Calu3 (cell line): ENCODE measurements at regions of chr3 and their contacts with region 1.

Region 1: DNA sequence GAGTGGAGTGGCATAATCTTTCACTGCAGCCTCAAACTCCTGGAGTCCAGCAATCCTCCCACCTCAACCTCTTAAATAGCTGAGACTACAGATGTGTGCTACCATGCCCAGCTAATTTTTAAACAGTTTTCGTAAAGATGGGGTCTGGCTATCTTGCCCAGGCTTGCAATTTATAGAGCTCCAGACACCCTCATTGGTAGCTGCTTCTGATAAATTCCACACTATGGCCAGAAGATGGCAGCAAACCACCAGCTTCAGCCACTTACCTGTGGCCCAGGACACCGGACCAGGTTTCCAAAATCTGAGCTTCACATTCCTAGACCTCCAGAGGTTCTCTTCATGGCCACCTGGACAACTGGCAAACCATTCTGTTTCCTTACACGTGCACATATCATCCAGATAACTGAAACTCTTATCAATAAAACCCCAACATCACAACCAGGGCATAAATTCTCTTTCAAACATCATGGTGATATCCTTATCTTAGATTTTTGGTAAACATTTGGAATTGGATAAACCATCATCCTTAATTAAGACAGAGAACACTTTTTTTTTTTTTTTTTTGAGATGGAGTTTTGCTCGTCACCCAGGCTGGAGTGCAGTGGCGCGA is 28.9 kb downstream of the FBXW12 start:
- DNase-seq: peak; percentile 60
- H3K4me3 Mint-ChIP-seq: no peak overlapping the region
- H3K27ac Mint-ChIP-seq: peak overlapping the region; percentile 36
- H3K4me1 Mint-ChIP-seq: peaks cover 13% of the 10 kb centered on the region
- H3K27me3 Mint-ChIP-seq: peaks cover 5% of the 10 kb centered on the region
- CTCF ChIP-seq: peak; percentile 66

Region 2: DNA sequence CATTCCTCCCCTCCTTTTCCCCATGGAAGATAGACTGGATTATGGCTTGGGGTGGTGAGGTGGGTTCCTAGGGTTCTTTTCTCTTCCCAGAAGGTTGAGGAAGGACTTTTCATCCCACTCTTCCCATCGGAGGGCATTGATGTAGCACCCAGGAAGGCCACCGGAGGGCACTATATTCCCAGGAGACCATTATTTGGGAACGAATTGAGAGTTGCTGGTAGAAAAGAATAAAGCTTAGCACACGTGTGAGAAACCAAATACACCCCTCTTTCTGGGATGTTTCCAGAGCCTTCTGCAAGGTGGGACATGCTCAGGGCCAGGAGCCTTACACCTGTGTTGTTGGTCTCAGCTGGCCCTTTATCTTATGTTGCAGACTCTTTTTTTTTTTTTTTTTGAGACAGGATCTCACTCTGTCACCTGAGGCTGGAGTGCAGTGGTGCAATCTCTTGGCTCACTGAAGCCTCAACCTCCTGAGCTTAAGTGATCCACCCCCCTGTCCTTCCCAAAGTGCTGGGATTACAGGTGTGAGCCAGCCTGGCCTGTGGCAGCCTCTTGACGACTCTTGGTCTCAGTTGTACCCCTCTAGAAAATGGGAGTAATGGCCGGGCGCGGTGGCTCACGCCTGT is 206.4 kb before region 1 on chr3:
- CTCF ChIA-PET with region 1: interaction called, 10 read pairs
- intact Hi-C with region 1: no loop called
- DNase-seq: peak; percentile 78
- H3K4me3 Mint-ChIP-seq: no peak overlapping the region
- H3K27ac Mint-ChIP-seq: no peak overlapping the region
- H3K4me1 Mint-ChIP-seq: peaks cover 13% of the 10 kb centered on the region
- H3K27me3 Mint-ChIP-seq: peaks cover 10% of the 10 kb centered on the region
- CTCF ChIP-seq: peak; percentile 70

Region 3: GRCh38 chr3:48429317-48429959 is 28.5 kb after region 1 on chr3:
- CTCF ChIA-PET with region 1: interaction called, 243 read pairs
- intact Hi-C with region 1: no loop called
- DNase-seq: peak; percentile 91
- H3K4me3 Mint-ChIP-seq: peak overlapping the region; percentile 80
- H3K27ac Mint-ChIP-seq: peak overlapping the region; percentile 89
- H3K4me1 Mint-ChIP-seq: peaks cover 62% of the 10 kb centered on the region
- H3K27me3 Mint-ChIP-seq: no peaks in the 10 kb centered on the region
- CTCF ChIP-seq: no peak